ENCODE measurements at regions of chr6 and their contacts with region 1.

Region 1: DNA sequence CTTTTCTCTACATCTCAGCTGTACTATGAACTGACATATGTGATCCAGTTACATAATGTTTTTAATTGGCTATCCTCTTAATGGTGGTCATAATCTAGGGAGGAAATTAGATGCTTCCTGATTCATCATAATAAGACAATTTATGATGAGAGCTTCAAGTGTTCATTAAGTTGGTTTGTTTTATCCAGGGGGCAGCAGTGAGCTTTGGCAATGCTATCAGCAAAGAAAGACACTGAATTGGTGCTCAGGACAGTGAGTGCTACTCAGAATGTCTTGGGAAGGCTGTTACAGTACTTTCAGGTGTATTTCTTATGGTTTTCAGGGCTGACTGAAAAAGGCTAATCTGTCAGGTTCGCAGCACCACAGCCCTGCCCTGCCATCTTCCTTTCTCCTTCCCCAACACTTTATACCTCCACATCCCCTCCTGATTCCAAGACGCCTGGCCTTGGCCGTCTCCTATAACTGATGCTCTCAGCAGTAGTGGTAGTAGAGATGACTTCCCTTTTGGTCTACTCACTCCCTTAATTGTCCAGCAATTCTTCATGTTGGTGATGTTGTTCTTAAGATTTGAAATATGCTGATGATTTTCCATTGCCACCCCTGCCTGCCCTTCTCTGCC is 67.0 kb upstream of the TNFAIP3 start:
- DNase-seq: peak; percentile 76 to 82 (median 80)
- H3K4me3 ChIP-seq: no peak overlapping the region
- H3K4me3 Mint-ChIP-seq: peak overlapping the region in 3 of 8 donors; percentile 4 to 30 (median 11)
- H3K27ac ChIP-seq: peak overlapping the region; percentile 36
- H3K27ac Mint-ChIP-seq: peak overlapping the region; percentile 28 to 98 (median 93)
- H3K4me1 ChIP-seq: peaks cover 41% of the 10 kb centered on the region
- H3K4me1 Mint-ChIP-seq: peaks cover 30 to 59% (median 43%) of the 10 kb centered on the region in 4 donors
- H3K27me3 ChIP-seq: no peaks in the 10 kb centered on the region
- H3K27me3 Mint-ChIP-seq: no peaks in the 10 kb centered on the region

Region 2: GRCh38 chr6:137707590-137708360 is 92.3 kb before region 1 on chr6:
- CTCF ChIA-PET with region 1: interaction called, 72 read pairs
- POLR2A ChIA-PET with region 1: interaction called, 60 read pairs
- intact Hi-C with region 1: loop called (anchors 1 kb)
- DNase-seq: peak; percentile 91 to 97 (median 96)
- H3K4me3 ChIP-seq: peak overlapping the region in 1 of 2 donors; percentile 36
- H3K4me3 Mint-ChIP-seq: peak overlapping the region; percentile 58 to 80 (median 72)
- H3K27ac ChIP-seq: peak overlapping the region; percentile 77
- H3K27ac Mint-ChIP-seq: peak overlapping the region; percentile 93 to 99 (median 98)
- H3K4me1 ChIP-seq: peaks cover 68% of the 10 kb centered on the region
- H3K4me1 Mint-ChIP-seq: peaks cover 39 to 70% (median 57%) of the 10 kb centered on the region in 4 donors
- H3K27me3 ChIP-seq: no peaks in the 10 kb centered on the region
- H3K27me3 Mint-ChIP-seq: peaks cover 0 to under 1% of the 10 kb centered on the region in 2 donors

Region 3: DNA sequence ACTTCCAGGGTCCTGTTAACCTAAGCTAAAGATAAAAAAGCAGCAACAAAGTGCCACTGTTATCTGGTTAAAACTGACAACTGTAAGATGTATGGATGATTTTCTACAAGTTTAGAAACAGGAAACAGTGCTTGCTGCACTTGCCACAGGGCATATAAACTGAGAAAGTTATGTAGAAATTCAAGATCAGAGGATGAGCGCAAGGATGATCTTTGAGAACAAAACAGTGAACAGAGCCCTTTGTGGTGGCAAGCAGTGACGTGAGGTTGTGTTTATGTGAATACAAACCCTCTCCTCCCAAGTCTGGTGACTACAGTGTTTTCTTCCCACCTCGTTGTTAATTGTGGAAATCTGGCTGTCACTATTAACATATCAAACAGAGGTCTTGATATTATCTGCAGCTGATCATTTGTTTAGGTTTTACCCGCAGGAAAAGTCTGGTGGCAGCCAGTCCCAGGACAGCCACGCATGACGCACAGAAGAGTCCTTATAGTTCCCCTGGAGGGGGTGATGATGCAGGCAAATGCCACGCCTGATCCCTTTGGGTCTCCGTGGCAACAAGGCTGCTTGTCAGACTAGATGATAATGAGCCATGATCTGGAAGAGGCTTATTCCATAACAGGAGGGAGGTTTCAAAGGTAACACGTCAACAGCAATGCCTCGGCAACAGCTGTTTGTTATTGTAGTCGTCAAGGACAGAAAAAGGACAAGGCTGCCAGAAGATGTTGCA is 23.9 kb after region 1 on chr6:
- CTCF ChIA-PET with region 1: interaction called, 48 read pairs
- POLR2A ChIA-PET with region 1: interaction called, 20 read pairs
- intact Hi-C with region 1: loop called (anchors 1 kb)
- DNase-seq: peak; percentile 92 to 99 (median 97)
- H3K4me3 ChIP-seq: no peak overlapping the region
- H3K4me3 Mint-ChIP-seq: peak overlapping the region; percentile 52 to 87 (median 77)
- H3K27ac ChIP-seq: peak overlapping the region; percentile 95
- H3K27ac Mint-ChIP-seq: peak overlapping the region; percentile 93 to 100 (median 100)
- H3K4me1 ChIP-seq: peaks cover 74% of the 10 kb centered on the region
- H3K4me1 Mint-ChIP-seq: peaks cover 44 to 75% (median 59%) of the 10 kb centered on the region in 4 donors
- H3K27me3 ChIP-seq: no peaks in the 10 kb centered on the region
- H3K27me3 Mint-ChIP-seq: no peaks in the 10 kb centered on the region

Region 4: DNA sequence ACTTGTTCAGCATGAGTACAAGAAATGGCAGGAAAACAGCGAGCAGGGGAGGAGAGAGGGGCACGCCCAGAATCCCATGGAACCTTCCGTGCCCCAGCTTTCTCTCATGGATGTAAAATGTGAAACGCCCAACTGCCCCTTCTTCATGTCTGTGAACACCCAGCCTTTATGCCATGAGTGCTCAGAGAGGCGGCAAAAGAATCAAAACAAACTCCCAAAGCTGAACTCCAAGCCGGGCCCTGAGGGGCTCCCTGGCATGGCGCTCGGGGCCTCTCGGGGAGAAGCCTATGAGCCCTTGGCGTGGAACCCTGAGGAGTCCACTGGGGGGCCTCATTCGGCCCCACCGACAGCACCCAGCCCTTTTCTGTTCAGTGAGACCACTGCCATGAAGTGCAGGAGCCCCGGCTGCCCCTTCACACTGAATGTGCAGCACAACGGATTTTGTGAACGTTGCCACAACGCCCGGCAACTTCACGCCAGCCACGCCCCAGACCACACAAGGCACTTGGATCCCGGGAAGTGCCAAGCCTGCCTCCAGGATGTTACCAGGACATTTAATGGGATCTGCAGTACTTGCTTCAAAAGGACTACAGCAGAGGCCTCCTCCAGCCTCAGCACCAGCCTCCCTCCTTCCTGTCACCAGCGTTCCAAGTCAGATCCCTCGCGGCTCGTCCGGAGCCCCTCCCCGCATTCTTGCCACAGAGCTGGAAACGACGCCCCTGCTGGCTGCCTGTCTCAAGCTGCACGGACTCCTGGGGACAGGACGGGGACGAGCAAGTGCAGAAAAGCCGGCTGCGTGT is 78.6 kb after region 1 on chr6:
- CTCF ChIA-PET with region 1: interaction called, 11 read pairs
- POLR2A ChIA-PET with region 1: interaction called, 3 read pairs
- intact Hi-C with region 1: no loop called
- DNase-seq: peak; percentile 46 to 59 (median 50)
- H3K4me3 ChIP-seq: no peak overlapping the region
- H3K4me3 Mint-ChIP-seq: peak overlapping the region in 5 of 8 donors; percentile 52 to 76 (median 63)
- H3K27ac ChIP-seq: peak overlapping the region; percentile 14
- H3K27ac Mint-ChIP-seq: peak overlapping the region; percentile 63 to 99 (median 84)
- H3K4me1 ChIP-seq: peaks cover 90% of the 10 kb centered on the region
- H3K4me1 Mint-ChIP-seq: peaks cover 35 to 98% (median 67%) of the 10 kb centered on the region in 4 donors
- H3K27me3 ChIP-seq: no peaks in the 10 kb centered on the region
- H3K27me3 Mint-ChIP-seq: no peaks in the 10 kb centered on the region

Region 5: GRCh38 chr6:137911675-137912191 is 111.7 kb after region 1 on chr6:
- CTCF ChIA-PET with region 1: no interaction called
- POLR2A ChIA-PET with region 1: no interaction called
- intact Hi-C with region 1: no loop called
- DNase-seq: no peak
- H3K4me3 ChIP-seq: no peak overlapping the region
- H3K4me3 Mint-ChIP-seq: no peak overlapping the region
- H3K27ac ChIP-seq: no peak overlapping the region
- H3K27ac Mint-ChIP-seq: no peak overlapping the region
- H3K4me1 ChIP-seq: no peaks in the 10 kb centered on the region
- H3K4me1 Mint-ChIP-seq: peaks cover 1 to 12% (median 6%) of the 10 kb centered on the region in 4 donors
- H3K27me3 ChIP-seq: no peaks in the 10 kb centered on the region
- H3K27me3 Mint-ChIP-seq: peaks cover 2 to 3% of the 10 kb centered on the region in 2 donors

Region 6: GRCh38 chr6:137975188-137975940 is 175.3 kb after region 1 on chr6:
- CTCF ChIA-PET with region 1: interaction called, 37 read pairs
- POLR2A ChIA-PET with region 1: interaction called, 10 read pairs
- intact Hi-C with region 1: loop called (anchors 1 kb)
- DNase-seq: peak; percentile 62 to 71 (median 67)
- H3K4me3 ChIP-seq: no peak overlapping the region
- H3K4me3 Mint-ChIP-seq: peak overlapping the region; percentile 67 to 93 (median 82)
- H3K27ac ChIP-seq: peak overlapping the region; percentile 57
- H3K27ac Mint-ChIP-seq: peak overlapping the region; percentile 87 to 99 (median 97)
- H3K4me1 ChIP-seq: peaks cover 37% of the 10 kb centered on the region
- H3K4me1 Mint-ChIP-seq: peaks cover 30 to 57% (median 34%) of the 10 kb centered on the region in 4 donors
- H3K27me3 ChIP-seq: no peaks in the 10 kb centered on the region
- H3K27me3 Mint-ChIP-seq: no peaks in the 10 kb centered on the region

Measured in CD4-positive, alpha-beta memory T cell (primary cell).